Body of pancreas (tissue), 4 donors: ENCODE measurements at regions of chr11 and their contacts with region 1.

Region 1: GRCh38 chr11:63635762-63636465 is 21.7 kb upstream of the PLAAT3 start:
- DNase-seq: peak; percentile 53 to 69 (median 62)
- ATAC-seq: peak; percentile 69
- H3K4me3 ChIP-seq: no peak overlapping the region
- H3K27ac ChIP-seq: no peak overlapping the region
- H3K4me1 ChIP-seq: peaks cover 11% of the 10 kb centered on the region
- H3K27me3 ChIP-seq: no peaks in the 10 kb centered on the region
- CTCF ChIP-seq: peak; percentile 44 to 91 (median 81)
- POLR2A ChIP-seq: no peak

Region 2: DNA sequence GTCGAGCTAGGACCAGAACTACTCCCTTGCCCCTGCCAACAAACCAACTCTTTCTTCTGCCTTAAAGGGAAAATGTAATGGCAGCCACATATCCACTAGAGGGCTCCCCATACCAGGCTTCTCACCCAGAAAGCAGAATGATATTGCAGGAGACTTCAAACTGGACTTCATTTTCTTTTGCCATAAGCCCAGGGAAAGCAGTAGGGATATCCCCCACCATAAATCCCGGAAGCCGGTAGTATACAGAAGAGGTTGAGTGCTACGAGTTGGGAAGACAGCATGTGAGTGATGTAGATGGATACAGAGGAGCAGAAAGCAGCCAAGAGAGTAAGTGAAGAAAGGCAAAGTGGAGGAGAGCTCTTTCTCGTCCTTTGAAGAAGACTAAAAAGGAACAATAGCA is 157.0 kb before region 1 on chr11:
- intact Hi-C with region 1: loop called (anchors 10 kb)
- DNase-seq: peak; percentile 60 to 72 (median 64)
- ATAC-seq: peak; percentile 88
- H3K4me3 ChIP-seq: no peak overlapping the region
- H3K27ac ChIP-seq: no peak overlapping the region
- H3K4me1 ChIP-seq: peaks cover 24% of the 10 kb centered on the region
- H3K27me3 ChIP-seq: no peaks in the 10 kb centered on the region
- CTCF ChIP-seq: peak; percentile 80 to 97 (median 96)
- POLR2A ChIP-seq: no peak

Region 3: DNA sequence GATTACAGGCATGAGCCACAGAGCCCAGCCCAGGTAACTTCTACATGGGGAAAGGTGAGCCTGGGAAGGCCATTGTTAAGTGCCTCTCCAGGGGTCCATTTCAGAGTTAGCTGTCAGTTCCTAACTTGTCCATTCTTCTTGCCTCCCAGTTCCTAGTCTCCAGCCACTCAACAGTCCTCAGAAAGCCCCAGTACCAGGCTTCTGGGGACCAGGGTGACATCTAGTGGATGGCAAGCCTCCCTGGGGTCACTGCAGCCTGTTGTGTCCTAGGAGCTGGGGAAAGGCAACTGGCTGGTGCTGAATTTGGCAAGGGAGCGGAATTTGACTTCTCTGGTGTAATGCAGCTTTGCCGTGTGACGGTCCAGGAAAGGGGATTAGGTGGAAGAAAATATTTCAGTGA is 127.9 kb before region 1 on chr11:
- intact Hi-C with region 1: loop called (anchors 10 kb)
- DNase-seq: peak; percentile 79 to 84 (median 81)
- ATAC-seq: peak; percentile 85
- H3K4me3 ChIP-seq: no peak overlapping the region
- H3K27ac ChIP-seq: no peak overlapping the region
- H3K4me1 ChIP-seq: peaks cover 40% of the 10 kb centered on the region
- H3K27me3 ChIP-seq: no peaks in the 10 kb centered on the region
- CTCF ChIP-seq: peak; percentile 33 to 89 (median 75)
- POLR2A ChIP-seq: no peak

Region 4: DNA sequence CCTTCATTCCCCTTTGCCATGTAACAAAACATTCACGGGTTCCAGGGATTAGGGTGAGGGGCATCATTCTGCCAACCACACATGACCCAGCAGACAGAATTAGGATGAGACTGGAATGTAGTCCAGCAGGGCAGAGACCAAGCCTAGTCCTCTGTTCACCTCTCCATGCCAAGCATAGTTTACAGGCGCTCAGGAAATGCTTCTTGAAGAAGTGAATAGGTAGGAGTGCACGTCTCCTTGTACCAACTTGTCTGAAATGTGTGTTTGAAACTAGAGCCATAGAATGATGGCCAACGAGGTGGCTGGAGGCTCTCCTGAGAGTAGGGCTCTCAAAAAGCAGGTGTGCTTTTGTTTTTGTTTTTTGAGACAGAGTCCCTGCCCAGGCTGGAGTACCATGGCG is 185.5 kb after region 1 on chr11:
- intact Hi-C with region 1: no loop called
- DNase-seq: no peak
- ATAC-seq: no peak
- H3K4me3 ChIP-seq: no peak overlapping the region
- H3K27ac ChIP-seq: no peak overlapping the region
- H3K4me1 ChIP-seq: no peaks in the 10 kb centered on the region
- H3K27me3 ChIP-seq: no peaks in the 10 kb centered on the region
- CTCF ChIP-seq: no peak
- POLR2A ChIP-seq: no peak